PC-9 (cell line): ENCODE measurements at regions of chr1 and their contacts with region 1.

Region 1: GRCh38 chr1:10007169-10007568 is 10.1 kb downstream of the RBP7 start:
- DNase-seq: no peak
- H3K4me3 ChIP-seq: no peak overlapping the region
- H3K27ac ChIP-seq: no peak overlapping the region
- H3K4me1 ChIP-seq: no peaks in the 10 kb centered on the region; the same call in 1 of the 2 replicates
- H3K27me3 ChIP-seq: no peaks in the 10 kb centered on the region
- CTCF ChIP-seq: no peak

Region 2: GRCh38 chr1:10032590-10033358 is 25.6 kb after region 1 on chr1 and contains the start of gene UBE4B:
- CTCF ChIA-PET with region 1: no interaction called
- POLR2A ChIA-PET with region 1: no interaction called
- intact Hi-C with region 1: no loop called
- DNase-seq: peak; percentile 84 to 99
- H3K4me3 ChIP-seq: peak within 1 kb of the TSS; percentile 82
- H3K27ac ChIP-seq: peak within 1 kb of the TSS; percentile 83
- H3K4me1 ChIP-seq: no peaks in the 10 kb centered on the region; the same call in 1 of the 2 replicates
- H3K27me3 ChIP-seq: no peaks in the 10 kb centered on the region
- CTCF ChIP-seq: peak; percentile 69
- total RNA-seq, gene UBE4B: 54.3 and 59.1 TPM in 2 replicates

Region 3: GRCh38 chr1:10057343-10057742 is 50.2 kb after region 1 on chr1:
- CTCF ChIA-PET with region 1: no interaction called
- POLR2A ChIA-PET with region 1: interaction called, 19 read pairs
- intact Hi-C with region 1: no loop called
- DNase-seq: no peak
- H3K4me3 ChIP-seq: no peak overlapping the region
- H3K27ac ChIP-seq: no peak overlapping the region
- H3K4me1 ChIP-seq: peaks cover 5% of the 10 kb centered on the region
- H3K27me3 ChIP-seq: no peaks in the 10 kb centered on the region
- CTCF ChIP-seq: no peak

Region 4: DNA sequence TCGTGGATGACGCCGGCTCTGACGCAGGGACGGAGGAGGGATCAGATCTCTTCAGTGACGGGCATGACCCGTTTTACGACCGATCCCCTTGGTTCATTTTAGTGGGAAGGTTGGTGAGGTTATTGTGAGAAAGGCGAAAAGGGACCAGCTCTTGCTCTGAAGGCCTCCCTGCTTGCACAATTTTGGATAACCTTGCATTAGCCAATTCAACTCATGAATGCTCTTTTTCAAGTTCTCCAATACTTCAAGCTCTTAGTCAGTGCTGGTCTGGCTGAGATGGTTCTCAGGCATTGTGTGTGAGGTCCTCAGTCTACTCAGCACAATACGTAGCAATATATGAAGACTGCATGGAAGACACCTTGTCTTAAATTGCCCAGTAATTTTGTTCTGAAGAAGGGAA is 319.1 kb after region 1 on chr1:
- CTCF ChIA-PET with region 1: interaction called, 12 read pairs
- POLR2A ChIA-PET with region 1: no interaction called
- intact Hi-C with region 1: no loop called
- DNase-seq: no peak
- H3K4me3 ChIP-seq: no peak overlapping the region
- H3K27ac ChIP-seq: no peak overlapping the region
- H3K4me1 ChIP-seq: no peaks in the 10 kb centered on the region
- H3K27me3 ChIP-seq: no peaks in the 10 kb centered on the region
- CTCF ChIP-seq: no peak